IMR-90 (cell line): ENCODE measurements at regions of chr21 and their contacts with region 1.

Region 1: GRCh38 chr21:42609811-42610210 is 43.6 kb upstream of the PDE9A start:
- DNase-seq: no peak
- ATAC-seq: no peak
- H3K4me3 ChIP-seq: no peak overlapping the region
- H3K27ac ChIP-seq: no peak overlapping the region
- H3K4me1 ChIP-seq: no peaks in the 10 kb centered on the region
- H3K27me3 ChIP-seq: peaks cover 3% of the 10 kb centered on the region; the same call in 1 of the 2 replicates
- CTCF ChIP-seq: no peak
- POLR2A ChIP-seq: no peak
- RAD21 ChIP-seq: no peak

Region 2: GRCh38 chr21:42463861-42464520 is 145.8 kb before region 1 on chr21:
- CTCF ChIA-PET with region 1: no interaction called
- POLR2A ChIA-PET with region 1: no interaction called
- dilution Hi-C with region 1: no loop called
- in situ Hi-C with region 1: no loop called
- intact Hi-C with region 1: no loop called
- DNase-seq: peak; percentile 68
- ATAC-seq: no peak
- H3K4me3 ChIP-seq: no peak overlapping the region
- H3K27ac ChIP-seq: no peak overlapping the region
- H3K4me1 ChIP-seq: no peaks in the 10 kb centered on the region
- H3K27me3 ChIP-seq: peaks cover 9% of the 10 kb centered on the region
- CTCF ChIP-seq: no peak
- POLR2A ChIP-seq: no peak
- RAD21 ChIP-seq: no peak

Region 3: GRCh38 chr21:42833439-42833815 is 223.6 kb after region 1 on chr21:
- CTCF ChIA-PET with region 1: no interaction called
- POLR2A ChIA-PET with region 1: no interaction called
- dilution Hi-C with region 1: no loop called
- in situ Hi-C with region 1: loop called (anchors 5 kb)
- intact Hi-C with region 1: no loop called
- DNase-seq: peak; percentile 5
- ATAC-seq: 0 out of 2 replicates have a peak, but pooled peaks have one; percentile 30
- H3K4me3 ChIP-seq: no peak overlapping the region
- H3K27ac ChIP-seq: no peak overlapping the region
- H3K4me1 ChIP-seq: no peaks in the 10 kb centered on the region
- H3K27me3 ChIP-seq: peaks cover 2% of the 10 kb centered on the region; the same call in 1 of the 2 replicates
- CTCF ChIP-seq: 0 out of 2 replicates have a peak, but pooled peaks have one; percentile 12
- POLR2A ChIP-seq: no peak
- RAD21 ChIP-seq: no peak